CD4-positive, alpha-beta T cell (primary cell): ENCODE measurements at regions of chr1 and their contacts with region 1.

Region 1: DNA sequence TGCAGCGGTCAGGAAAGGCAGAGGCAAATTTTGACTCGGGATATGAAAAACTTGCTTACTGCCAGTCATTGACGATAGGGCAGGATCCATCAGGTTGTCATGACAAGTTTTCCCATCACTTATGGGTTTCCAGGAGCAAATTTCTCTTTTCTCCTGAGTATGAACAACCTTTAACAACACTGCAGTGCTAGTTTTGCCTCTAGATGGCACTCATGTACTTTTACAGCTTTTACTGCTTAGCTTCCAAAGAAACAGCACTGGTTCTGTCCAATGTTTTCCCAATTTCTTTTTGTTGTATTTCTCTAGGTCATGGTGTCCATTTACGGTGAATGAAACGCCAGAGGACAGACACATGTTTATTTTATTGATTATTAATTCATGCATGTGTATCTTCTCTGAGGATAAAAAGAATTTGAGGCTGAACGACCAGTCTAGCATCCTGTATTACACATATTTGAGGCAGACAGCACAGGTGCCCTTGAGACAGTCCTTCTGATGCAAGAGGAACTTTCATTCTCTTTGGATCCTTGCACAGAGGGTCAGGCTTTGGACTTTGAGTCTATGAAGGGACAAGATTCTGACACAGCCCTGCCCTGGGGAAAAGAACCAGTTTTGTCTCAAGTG is 112.3 kb upstream of the TRABD2B start:
- DNase-seq: peak in 4 of 14 experiments; percentile 19 to 50 (median 34)
- ATAC-seq: no peak
- H3K4me3 ChIP-seq: no peak overlapping the region
- H3K4me3 Mint-ChIP-seq: no peak overlapping the region
- H3K27ac ChIP-seq: no peak overlapping the region
- H3K27ac Mint-ChIP-seq: no peak overlapping the region
- H3K4me1 ChIP-seq: no peaks in the 10 kb centered on the region
- H3K4me1 Mint-ChIP-seq: no peaks in the 10 kb centered on the region
- H3K27me3 ChIP-seq: peaks cover 0 to 4% of the 10 kb centered on the region in 2 experiments
- H3K27me3 Mint-ChIP-seq: peaks cover 33% of the 10 kb centered on the region
- CTCF ChIP-seq: peak; percentile 70

Region 2: GRCh38 chr1:47587891-47588582 is 521.5 kb before region 1 on chr1:
- CTCF ChIA-PET with region 1: no interaction called
- POLR2A ChIA-PET with region 1: no interaction called
- intact Hi-C with region 1: no loop called
- DNase-seq: no peak
- ATAC-seq: no peak
- H3K4me3 ChIP-seq: no peak overlapping the region
- H3K4me3 Mint-ChIP-seq: no peak overlapping the region
- H3K27ac ChIP-seq: no peak overlapping the region
- H3K27ac Mint-ChIP-seq: no peak overlapping the region
- H3K4me1 ChIP-seq: no peaks in the 10 kb centered on the region
- H3K4me1 Mint-ChIP-seq: no peaks in the 10 kb centered on the region
- H3K27me3 ChIP-seq: peaks cover 22 to 36% of the 10 kb centered on the region in 2 experiments
- H3K27me3 Mint-ChIP-seq: peaks cover 42% of the 10 kb centered on the region
- CTCF ChIP-seq: no peak

Region 3: GRCh38 chr1:48061162-48062136 is 48.1 kb before region 1 on chr1:
- CTCF ChIA-PET with region 1: no interaction called
- POLR2A ChIA-PET with region 1: no interaction called
- intact Hi-C with region 1: no loop called
- DNase-seq: peak in 2 of 14 experiments; percentile 3
- ATAC-seq: no peak
- H3K4me3 ChIP-seq: no peak overlapping the region
- H3K4me3 Mint-ChIP-seq: no peak overlapping the region
- H3K27ac ChIP-seq: no peak overlapping the region
- H3K27ac Mint-ChIP-seq: no peak overlapping the region
- H3K4me1 ChIP-seq: no peaks in the 10 kb centered on the region
- H3K4me1 Mint-ChIP-seq: no peaks in the 10 kb centered on the region
- H3K27me3 ChIP-seq: peaks cover 0 to 4% of the 10 kb centered on the region in 2 experiments
- H3K27me3 Mint-ChIP-seq: peaks cover 6% of the 10 kb centered on the region
- CTCF ChIP-seq: peak; percentile 23

Region 4: DNA sequence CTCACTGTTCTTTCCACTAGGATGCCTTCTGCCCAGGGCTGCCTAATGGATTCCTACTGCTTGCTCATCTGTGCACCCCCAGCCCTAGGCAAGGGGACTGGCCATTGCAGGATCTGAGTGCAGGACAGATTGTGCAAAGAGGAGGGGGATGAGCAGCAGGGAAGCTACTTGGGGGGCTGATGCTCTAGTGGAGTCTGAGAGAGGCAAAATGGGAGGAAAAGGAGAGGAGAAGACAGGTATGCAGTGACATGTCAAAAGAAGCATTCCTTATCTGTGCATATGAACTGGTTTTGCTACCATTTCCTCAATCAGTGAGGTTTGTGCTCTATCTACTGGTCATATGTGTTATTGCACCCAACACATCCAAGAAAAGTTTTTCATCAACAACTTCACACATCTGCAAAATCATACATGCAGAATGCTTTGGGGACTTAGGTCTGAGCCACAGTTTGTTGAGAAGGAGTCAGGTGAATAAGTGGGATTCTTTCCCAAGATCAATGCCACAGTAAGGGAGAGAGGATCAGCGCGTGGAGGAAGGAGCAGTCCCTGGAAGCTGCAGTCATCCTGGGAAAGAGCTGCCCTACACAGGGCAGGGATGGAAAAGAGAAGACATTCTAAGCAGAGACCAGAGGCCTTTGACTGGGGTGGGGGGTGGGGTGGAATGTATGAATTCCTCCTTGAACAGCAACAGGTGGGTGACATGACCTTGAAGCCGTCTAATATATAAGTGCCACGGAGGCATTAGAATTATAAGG is 127.4 kb after region 1 on chr1:
- CTCF ChIA-PET with region 1: no interaction called
- POLR2A ChIA-PET with region 1: no interaction called
- intact Hi-C with region 1: loop called (anchors 1 to 5 kb)
- DNase-seq: peak in 3 of 14 experiments; percentile 44 to 63 (median 56)
- ATAC-seq: peak; percentile 56
- H3K4me3 ChIP-seq: no peak overlapping the region
- H3K4me3 Mint-ChIP-seq: no peak overlapping the region
- H3K27ac ChIP-seq: no peak overlapping the region
- H3K27ac Mint-ChIP-seq: no peak overlapping the region
- H3K4me1 ChIP-seq: no peaks in the 10 kb centered on the region
- H3K4me1 Mint-ChIP-seq: no peaks in the 10 kb centered on the region
- H3K27me3 ChIP-seq: peaks cover 0 to 2% of the 10 kb centered on the region in 2 experiments
- H3K27me3 Mint-ChIP-seq: no peaks in the 10 kb centered on the region
- CTCF ChIP-seq: peak; percentile 80

Region 5: DNA sequence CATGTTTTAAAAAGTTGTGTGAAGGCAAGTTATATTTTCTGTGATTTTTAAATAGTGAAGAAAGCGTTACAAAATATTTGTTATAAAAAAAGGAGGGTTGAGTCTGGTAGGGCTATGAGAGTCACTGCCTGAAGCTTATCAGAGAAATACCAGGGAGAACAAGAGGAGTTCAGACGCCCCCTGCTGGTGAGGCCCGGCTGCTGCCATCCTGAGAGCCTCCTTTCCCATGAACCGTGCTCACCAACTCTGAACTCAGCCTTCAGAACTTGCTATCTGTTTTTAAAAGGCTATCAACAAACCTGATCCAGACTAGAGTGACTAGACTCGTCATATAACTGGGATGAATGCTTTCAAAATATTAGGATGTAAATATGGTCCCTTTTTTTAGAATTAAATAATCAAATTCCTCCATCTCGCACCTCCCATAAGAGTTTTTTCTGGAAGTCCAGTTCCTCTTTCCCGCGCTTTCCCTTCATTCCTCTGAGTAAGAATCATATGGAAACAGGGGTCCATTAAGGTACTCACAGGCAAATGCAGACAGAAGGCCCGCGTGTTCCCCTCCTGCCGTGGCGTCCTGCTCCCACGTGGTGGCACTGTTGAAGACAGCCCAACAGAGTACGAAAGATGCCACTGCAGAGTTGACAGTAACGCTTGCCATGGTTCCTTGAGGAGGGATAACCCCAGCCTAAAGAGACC is 388.7 kb after region 1 on chr1:
- CTCF ChIA-PET with region 1: interaction called, 4 read pairs
- POLR2A ChIA-PET with region 1: no interaction called
- intact Hi-C with region 1: loop called in 1 of 2 experiments (anchors 5 kb)
- DNase-seq: peak; percentile 35 to 82 (median 61)
- ATAC-seq: peak; percentile 84
- H3K4me3 ChIP-seq: no peak overlapping the region
- H3K4me3 Mint-ChIP-seq: peak overlapping the region; percentile 22
- H3K27ac ChIP-seq: no peak overlapping the region
- H3K27ac Mint-ChIP-seq: no peak overlapping the region
- H3K4me1 ChIP-seq: peaks cover 5% of the 10 kb centered on the region
- H3K4me1 Mint-ChIP-seq: peaks cover 6% of the 10 kb centered on the region
- H3K27me3 ChIP-seq: peaks cover 0 to 7% of the 10 kb centered on the region in 2 experiments
- H3K27me3 Mint-ChIP-seq: no peaks in the 10 kb centered on the region
- CTCF ChIP-seq: peak; percentile 95

Region 6: GRCh38 chr1:48697066-48697707 is 587.7 kb after region 1 on chr1:
- CTCF ChIA-PET with region 1: no interaction called
- POLR2A ChIA-PET with region 1: no interaction called
- intact Hi-C with region 1: loop called in 1 of 2 experiments (anchors 5 kb)
- DNase-seq: peak in 13 of 14 experiments; percentile 10 to 61 (median 31)
- ATAC-seq: no peak
- H3K4me3 ChIP-seq: no peak overlapping the region
- H3K4me3 Mint-ChIP-seq: no peak overlapping the region
- H3K27ac ChIP-seq: no peak overlapping the region
- H3K27ac Mint-ChIP-seq: no peak overlapping the region
- H3K4me1 ChIP-seq: no peaks in the 10 kb centered on the region
- H3K4me1 Mint-ChIP-seq: no peaks in the 10 kb centered on the region
- H3K27me3 ChIP-seq: peaks cover 0 to 4% of the 10 kb centered on the region in 2 experiments
- H3K27me3 Mint-ChIP-seq: peaks cover 53% of the 10 kb centered on the region
- CTCF ChIP-seq: peak; percentile 79